ENCODE measurements at regions of chr15 and their contacts with region 1.

Region 1: DNA sequence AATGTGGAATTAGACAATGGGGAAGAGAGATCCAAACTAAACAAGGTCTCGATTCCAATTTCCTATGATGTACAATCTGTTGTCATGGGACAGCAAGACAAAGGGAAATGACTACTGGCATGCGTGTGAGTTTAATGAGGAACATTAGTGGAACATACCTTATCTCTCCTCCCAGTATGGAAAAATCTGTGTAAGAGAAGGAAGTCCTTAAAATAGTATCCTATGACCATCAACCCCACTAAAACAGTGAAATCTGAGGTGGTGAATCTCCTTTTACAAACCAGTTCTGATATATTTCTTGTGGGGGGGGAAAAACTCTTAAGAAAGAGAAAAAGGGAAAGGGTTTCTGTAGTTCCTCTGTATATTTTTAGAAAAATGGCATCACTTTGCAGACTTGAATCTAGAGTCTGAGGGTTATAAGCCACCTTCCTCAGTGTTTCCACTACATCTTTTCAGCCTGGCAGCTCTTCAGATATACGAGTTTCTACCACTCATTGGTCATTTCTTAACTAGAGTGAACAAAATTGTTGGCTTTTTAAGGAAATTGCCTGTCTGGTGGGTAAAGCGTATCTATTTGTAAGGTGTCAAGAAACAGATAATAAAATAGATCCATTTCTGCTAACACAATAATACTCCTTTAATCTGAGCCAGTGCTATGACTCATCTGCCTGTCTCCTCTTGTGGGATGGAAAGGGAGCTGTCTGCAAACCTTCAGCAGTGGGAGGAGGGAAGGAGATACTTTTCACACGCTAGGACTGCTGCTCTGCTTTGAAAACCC is 3.0 kb upstream of the TNFAIP8L3 start:
- DNase-seq: no peak
- H3K4me3 Mint-ChIP-seq: no peak overlapping the region
- H3K27ac Mint-ChIP-seq: no peak overlapping the region
- H3K4me1 Mint-ChIP-seq: peaks cover 10% of the 10 kb centered on the region
- H3K27me3 Mint-ChIP-seq: peaks cover 65% of the 10 kb centered on the region

Region 2: DNA sequence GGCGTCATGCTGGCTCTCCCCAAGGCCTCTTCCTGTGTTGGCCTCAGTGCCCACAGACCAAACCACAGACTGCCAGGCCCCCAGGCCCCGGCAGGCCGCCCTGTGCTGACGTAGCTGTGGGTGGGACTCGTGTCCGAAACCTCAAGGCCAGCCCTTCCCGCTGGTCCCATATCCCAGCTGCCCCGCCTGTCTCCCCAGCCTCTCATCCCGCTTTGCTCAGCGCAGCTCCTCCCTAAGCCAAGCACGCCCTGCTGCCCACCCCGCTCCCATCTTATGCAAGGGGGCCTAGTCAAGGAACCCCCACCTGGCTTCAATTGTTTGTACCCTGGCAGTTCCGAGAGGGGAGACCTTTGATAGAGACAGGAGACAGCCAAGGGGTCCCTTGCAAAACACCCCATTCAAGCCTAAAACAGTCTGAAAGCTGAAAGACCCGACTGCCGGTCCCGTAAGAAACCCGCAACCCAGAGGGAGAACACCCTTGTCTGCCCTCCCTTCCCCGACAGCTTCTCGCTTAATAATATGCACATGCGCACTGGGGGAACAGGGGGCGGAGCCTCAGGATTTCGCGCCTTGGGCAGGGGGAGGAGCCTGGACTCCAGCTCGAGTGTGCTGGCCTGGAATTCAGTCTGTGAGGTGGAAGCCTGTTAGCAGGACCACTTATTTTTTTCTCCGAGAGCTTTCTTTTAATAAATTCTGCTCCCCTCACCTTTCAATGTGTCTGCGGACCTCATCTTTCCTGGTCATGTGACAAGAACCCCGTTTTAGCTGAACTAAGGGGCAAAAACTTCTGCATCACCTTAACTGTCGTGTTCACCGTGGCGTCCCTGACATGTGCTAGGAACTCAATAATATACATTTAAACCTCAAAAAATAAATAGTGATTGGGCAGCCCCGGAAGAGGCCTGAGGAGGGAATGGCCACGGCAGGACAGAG is 20.3 kb before region 1 on chr15:
- intact Hi-C with region 1: loop called (anchors 2 kb)
- DNase-seq: peak; percentile 48
- H3K4me3 Mint-ChIP-seq: no peak overlapping the region
- H3K27ac Mint-ChIP-seq: peak overlapping the region; percentile 55
- H3K4me1 Mint-ChIP-seq: peaks cover 35% of the 10 kb centered on the region
- H3K27me3 Mint-ChIP-seq: peaks cover 5% of the 10 kb centered on the region

Region 3: GRCh38 chr15:51129535-51130188 is 31.9 kb after region 1 on chr15:
- intact Hi-C with region 1: no loop called
- DNase-seq: no peak
- H3K4me3 Mint-ChIP-seq: no peak overlapping the region
- H3K27ac Mint-ChIP-seq: no peak overlapping the region
- H3K4me1 Mint-ChIP-seq: peaks cover 9% of the 10 kb centered on the region
- H3K27me3 Mint-ChIP-seq: peaks cover 7% of the 10 kb centered on the region

Measured in activated T-helper 1 cell treated with anti-CD3 and anti-CD28 coated beads, Interleukin-12 subunit alpha, Interleukin-12 subunit beta, Interleukin-2, Interleukin-4 antibody, amounts not matched to agents 30 ng/mL and 10 ng/mL and 1 ng/mL, durations not matched to agents 14 hours and 24 hours and 36 hours (primary cell).